Vagina (tissue), 2 donors: ENCODE measurements at regions of chr4 and their contacts with region 1.

Region 1: GRCh38 chr4:94621491-94622080 is 136.2 kb upstream of the BMPR1B start:
- DNase-seq: no peak
- H3K4me3 ChIP-seq: no peak overlapping the region
- H3K27ac ChIP-seq: no peak overlapping the region
- H3K4me1 ChIP-seq: no peaks in the 10 kb centered on the region
- H3K27me3 ChIP-seq: no peaks in the 10 kb centered on the region
- CTCF ChIP-seq: peak; percentile 48 to 64 (median 62)
- POLR2A ChIP-seq: no peak

Region 2: DNA sequence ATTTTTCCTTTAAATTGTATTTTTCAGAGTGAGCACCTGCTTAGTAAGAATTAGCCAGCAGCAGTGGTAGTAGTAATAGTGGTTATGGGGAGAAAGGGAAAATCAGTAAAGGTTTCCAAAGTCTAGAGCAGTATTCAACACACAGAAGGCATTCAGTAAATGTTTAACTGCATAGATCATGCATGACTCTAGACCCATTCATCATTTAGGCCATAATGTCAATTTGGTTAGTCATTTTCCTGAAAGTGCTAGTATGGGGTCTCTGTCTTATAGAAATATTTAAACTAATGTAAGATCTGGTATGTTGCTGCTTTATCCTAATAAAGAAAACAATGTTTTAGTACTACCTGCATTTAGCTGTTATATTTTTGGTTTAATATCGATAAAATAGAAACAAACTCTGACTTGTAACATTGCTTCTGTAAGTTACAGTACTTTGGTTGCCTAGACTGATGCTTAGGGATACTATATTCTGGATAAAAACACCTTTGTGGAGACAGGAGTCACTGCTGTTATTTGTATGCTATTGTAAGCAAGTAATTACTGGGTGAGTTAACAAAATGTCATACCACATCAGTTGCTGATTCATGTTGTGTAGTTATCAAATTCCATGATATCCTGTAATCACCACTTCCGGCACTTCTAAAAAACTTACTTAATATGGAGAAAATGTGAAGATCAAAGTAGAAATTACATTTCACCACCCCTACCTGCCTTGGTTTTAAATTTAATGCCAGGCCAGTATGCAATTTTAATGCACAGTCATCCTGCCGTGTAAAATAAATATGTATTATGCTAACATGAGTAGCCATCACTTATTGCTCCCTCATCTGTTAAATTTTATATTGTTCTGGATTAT is 20.3 kb after region 1 on chr4:
- intact Hi-C with region 1: no loop called
- DNase-seq: no peak
- H3K4me3 ChIP-seq: no peak overlapping the region
- H3K27ac ChIP-seq: no peak overlapping the region
- H3K4me1 ChIP-seq: no peaks in the 10 kb centered on the region
- H3K27me3 ChIP-seq: no peaks in the 10 kb centered on the region
- CTCF ChIP-seq: no peak
- POLR2A ChIP-seq: no peak

Region 3: GRCh38 chr4:95095348-95095974 is 473.9 kb after region 1 on chr4:
- intact Hi-C with region 1: loop called (anchors 10 kb)
- DNase-seq: no peak
- H3K4me3 ChIP-seq: no peak overlapping the region
- H3K27ac ChIP-seq: no peak overlapping the region
- H3K4me1 ChIP-seq: no peaks in the 10 kb centered on the region
- H3K27me3 ChIP-seq: no peaks in the 10 kb centered on the region
- CTCF ChIP-seq: no peak
- POLR2A ChIP-seq: no peak